Ascending aorta (tissue), 2 donors: ENCODE measurements at regions of chr1 and their contacts with region 1.

Region 1: GRCh38 chr1:221839796-221840395 is 98.0 kb upstream of the DUSP10 start:
- DNase-seq: peak in 1 of 2 donors; percentile 71
- H3K4me3 ChIP-seq: no peak overlapping the region
- H3K27ac ChIP-seq: no peak overlapping the region
- H3K4me1 ChIP-seq: no peaks in the 10 kb centered on the region
- H3K27me3 ChIP-seq: no peaks in the 10 kb centered on the region
- CTCF ChIP-seq: no peak

Region 2: DNA sequence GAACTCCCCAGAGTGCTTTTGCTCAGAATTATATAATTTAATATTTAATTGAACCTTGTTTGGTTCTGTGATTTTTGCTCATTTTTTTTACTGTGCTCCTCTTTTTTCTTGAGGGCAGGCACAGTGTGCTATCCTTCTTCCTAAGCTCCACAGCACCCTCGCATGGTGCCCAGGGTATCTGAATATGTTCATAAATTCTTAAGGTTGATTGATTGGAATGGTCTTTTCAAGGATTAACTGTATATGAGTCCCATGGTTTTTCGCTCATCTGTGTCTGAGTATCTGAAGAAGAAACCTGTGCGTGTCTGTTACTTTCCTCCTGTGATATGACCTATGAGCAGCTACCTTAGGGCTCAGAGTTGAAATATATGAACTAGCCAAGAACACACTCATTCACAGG is 567.0 kb before region 1 on chr1:
- intact Hi-C with region 1: loop called (anchors 10 kb)
- DNase-seq: no peak
- H3K4me3 ChIP-seq: no peak overlapping the region
- H3K27ac ChIP-seq: no peak overlapping the region
- H3K4me1 ChIP-seq: no peaks in the 10 kb centered on the region
- H3K27me3 ChIP-seq: no peaks in the 10 kb centered on the region
- CTCF ChIP-seq: no peak

Region 3: GRCh38 chr1:221729771-221730330 is 110.0 kb before region 1 on chr1:
- intact Hi-C with region 1: no loop called
- DNase-seq: no peak
- H3K4me3 ChIP-seq: no peak overlapping the region
- H3K27ac ChIP-seq: no peak overlapping the region
- H3K4me1 ChIP-seq: peaks cover 0 to 18% of the 10 kb centered on the region in 2 donors
- H3K27me3 ChIP-seq: no peaks in the 10 kb centered on the region
- CTCF ChIP-seq: no peak